Activated B cell treated with CpG ODN at 0.5 μM for 24 hours (primary cell): ENCODE measurements at regions of chr3 and their contacts with region 1.

Region 1: DNA sequence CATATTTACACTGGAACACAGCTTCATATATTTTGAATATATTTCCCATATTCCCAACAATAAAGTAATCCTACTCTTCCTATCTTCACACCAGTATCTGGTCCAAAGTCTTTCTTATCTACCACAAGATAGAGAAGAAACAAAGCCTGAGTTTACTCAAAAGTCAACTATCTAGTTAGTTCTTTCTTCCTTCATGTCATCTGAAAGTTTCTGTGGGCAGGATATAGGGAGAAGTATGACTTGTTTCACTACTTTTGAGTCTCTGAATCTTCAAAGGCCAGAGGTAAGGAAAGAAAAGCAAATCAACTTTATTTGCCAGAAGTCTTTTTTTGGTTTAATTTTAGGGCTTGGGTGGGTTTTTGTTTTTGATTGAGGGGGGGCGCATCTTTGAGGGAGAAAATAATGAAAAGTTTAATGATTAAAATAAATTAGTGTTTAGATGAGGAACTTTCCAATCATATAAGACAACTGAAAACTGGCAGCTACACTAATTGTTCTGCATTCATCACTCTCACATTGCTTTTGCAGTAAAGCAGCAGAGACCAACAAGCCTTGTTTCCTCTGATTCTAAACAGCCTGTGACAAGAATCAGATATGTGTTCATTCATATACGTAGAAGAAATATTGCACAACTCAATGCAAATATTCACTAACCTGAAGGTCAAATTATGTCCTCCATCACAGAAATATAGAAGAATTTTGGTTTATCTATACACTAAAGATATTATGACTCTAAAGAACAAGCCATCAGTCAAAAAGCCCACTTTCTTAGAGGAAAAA is 421.4 kb downstream of the SHQ1 start:
- DNase-seq: no peak
- ATAC-seq: peak; percentile 40
- H3K4me3 Mint-ChIP-seq: peak overlapping the region; percentile 74
- H3K27ac Mint-ChIP-seq: peak overlapping the region; percentile 30
- H3K4me1 Mint-ChIP-seq: peaks cover 76% of the 10 kb centered on the region
- H3K27me3 Mint-ChIP-seq: no peaks in the 10 kb centered on the region
- CTCF ChIP-seq: no peak

Region 2: DNA sequence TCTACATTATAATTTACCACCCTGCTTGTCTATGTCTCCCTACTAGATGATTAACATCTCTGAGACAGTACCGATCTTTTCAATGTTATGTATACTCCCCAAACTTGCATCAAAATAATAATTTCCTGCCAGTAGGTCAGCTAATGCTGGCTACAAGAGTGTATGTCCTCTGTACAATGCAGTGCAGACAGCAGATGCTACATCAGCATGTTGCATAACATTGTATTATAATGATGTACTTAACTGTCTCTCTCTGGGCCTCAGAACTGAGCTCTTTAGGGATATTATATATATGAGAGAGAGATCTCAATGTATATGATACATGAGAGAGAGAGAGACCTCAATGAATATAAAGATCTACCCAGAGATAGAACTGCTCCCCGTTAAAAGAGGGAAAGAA is 35.1 kb before region 1 on chr3:
- CTCF ChIA-PET with region 1: no interaction called
- POLR2A ChIA-PET with region 1: no interaction called
- intact Hi-C with region 1: loop called (anchors 5 kb)
- DNase-seq: no peak
- ATAC-seq: no peak
- H3K4me3 Mint-ChIP-seq: no peak overlapping the region
- H3K27ac Mint-ChIP-seq: no peak overlapping the region
- H3K4me1 Mint-ChIP-seq: peaks cover 59% of the 10 kb centered on the region
- H3K27me3 Mint-ChIP-seq: no peaks in the 10 kb centered on the region
- CTCF ChIP-seq: no peak

Region 3: DNA sequence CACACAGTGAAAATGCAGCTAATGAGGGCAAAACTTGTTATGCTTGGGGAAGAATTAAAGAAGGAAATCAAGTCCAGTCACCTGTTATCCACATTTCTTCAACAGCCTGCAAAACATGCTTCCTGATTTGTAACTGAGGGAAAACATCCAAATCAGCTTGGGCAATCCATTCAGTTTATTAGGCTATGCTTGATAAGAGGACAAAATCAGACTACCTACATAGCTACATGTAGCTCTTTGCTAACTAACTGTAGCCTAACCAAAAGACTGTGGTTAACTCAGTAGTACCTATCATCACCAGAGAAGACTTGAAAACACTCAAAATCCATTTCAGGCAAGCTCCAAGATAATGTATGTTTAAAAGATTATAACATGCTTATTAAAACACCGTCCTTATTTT is 15.0 kb before region 1 on chr3:
- CTCF ChIA-PET with region 1: no interaction called
- POLR2A ChIA-PET with region 1: no interaction called
- intact Hi-C with region 1: loop called (anchors 2 kb)
- DNase-seq: no peak
- ATAC-seq: no peak
- H3K4me3 Mint-ChIP-seq: no peak overlapping the region
- H3K27ac Mint-ChIP-seq: no peak overlapping the region
- H3K4me1 Mint-ChIP-seq: peaks cover 85% of the 10 kb centered on the region
- H3K27me3 Mint-ChIP-seq: no peaks in the 10 kb centered on the region
- CTCF ChIP-seq: no peak

Region 4: GRCh38 chr3:72439321-72440183 is 12.7 kb after region 1 on chr3:
- CTCF ChIA-PET with region 1: no interaction called
- POLR2A ChIA-PET with region 1: interaction called, 7 read pairs
- intact Hi-C with region 1: loop called (anchors 1 kb)
- DNase-seq: no peak
- ATAC-seq: peak; percentile 16
- H3K4me3 Mint-ChIP-seq: peak overlapping the region; percentile 40
- H3K27ac Mint-ChIP-seq: no peak overlapping the region
- H3K4me1 Mint-ChIP-seq: peaks cover 77% of the 10 kb centered on the region
- H3K27me3 Mint-ChIP-seq: no peaks in the 10 kb centered on the region
- CTCF ChIP-seq: no peak